T-cell (primary cell): ENCODE measurements at regions of chr12 and their contacts with region 1.

Region 1: DNA sequence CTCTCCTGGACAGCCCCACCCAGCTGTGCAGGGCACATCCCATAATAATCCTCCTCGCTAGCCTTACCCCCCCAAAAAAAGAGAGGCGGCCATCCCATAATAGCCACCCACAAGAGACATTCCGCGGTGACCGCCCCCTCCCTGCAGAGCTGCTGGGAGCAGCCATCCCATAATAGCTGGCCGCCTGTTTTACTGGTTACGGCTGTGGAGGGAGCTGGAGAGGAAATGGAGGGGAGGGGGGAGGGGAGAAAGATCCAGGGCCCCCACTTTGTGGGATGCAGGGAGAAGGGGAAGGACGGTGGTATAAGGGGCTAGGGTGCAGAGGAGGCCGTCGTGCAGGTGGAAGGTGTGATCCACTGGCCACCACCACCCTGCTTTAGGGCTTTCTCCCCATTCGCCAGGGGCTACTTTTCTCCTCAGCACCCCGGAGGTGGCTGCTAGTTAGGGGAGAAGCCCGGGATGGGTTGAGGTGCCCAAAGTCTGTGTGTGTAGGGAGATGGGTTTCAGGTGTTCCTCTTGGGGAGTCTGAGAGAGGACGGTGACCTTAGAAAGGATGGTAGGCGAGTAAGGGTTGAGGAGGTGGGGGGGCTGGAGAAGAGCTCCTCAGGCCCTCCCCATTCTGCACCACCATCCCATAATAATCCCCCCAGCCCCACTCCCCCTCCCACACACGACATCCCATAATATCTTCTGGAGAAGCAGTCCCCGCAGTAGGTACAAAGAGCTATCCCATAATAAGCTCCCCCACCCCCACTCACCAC is 6.0 kb upstream of the CHD4 start:
- DNase-seq: peak in 4 of 35 experiments; percentile 19 to 55 (median 48)
- ATAC-seq: peak; percentile 1 to 23 (median 7)
- H3K4me3 ChIP-seq: no peak overlapping the region
- H3K4me3 Mint-ChIP-seq: peak overlapping the region in 1 of 3 donors; percentile 72
- H3K27ac ChIP-seq: peak overlapping the region; percentile 65
- H3K27ac Mint-ChIP-seq: peak overlapping the region; percentile 94 to 96
- H3K4me1 ChIP-seq: peaks cover 20 to 44% of the 10 kb centered on the region in 2 experiments
- H3K4me1 Mint-ChIP-seq: peaks cover 38 to 57% (median 52%) of the 10 kb centered on the region in 3 donors
- H3K27me3 ChIP-seq: no peaks in the 10 kb centered on the region
- H3K27me3 Mint-ChIP-seq: no peaks in the 10 kb centered on the region

Region 2: GRCh38 chr12:6080154-6081045 is 532.8 kb before region 1 on chr12:
- CTCF ChIA-PET with region 1: no interaction called
- POLR2A ChIA-PET with region 1: interaction called in 1 of 2 experiments, 11 read pairs
- DNase-seq: no peak
- ATAC-seq: no peak
- H3K4me3 ChIP-seq: no peak overlapping the region
- H3K4me3 Mint-ChIP-seq: no peak overlapping the region
- H3K27ac ChIP-seq: no peak overlapping the region
- H3K27ac Mint-ChIP-seq: peak overlapping the region; percentile 17 to 28
- H3K4me1 ChIP-seq: peaks cover 5 to 7% of the 10 kb centered on the region in 2 experiments
- H3K4me1 Mint-ChIP-seq: peaks cover 6 to 12% (median 11%) of the 10 kb centered on the region in 3 donors
- H3K27me3 ChIP-seq: peaks cover 0 to 38% of the 10 kb centered on the region in 2 experiments
- H3K27me3 Mint-ChIP-seq: peaks cover 11 to 30% of the 10 kb centered on the region in 2 donors

Region 3: DNA sequence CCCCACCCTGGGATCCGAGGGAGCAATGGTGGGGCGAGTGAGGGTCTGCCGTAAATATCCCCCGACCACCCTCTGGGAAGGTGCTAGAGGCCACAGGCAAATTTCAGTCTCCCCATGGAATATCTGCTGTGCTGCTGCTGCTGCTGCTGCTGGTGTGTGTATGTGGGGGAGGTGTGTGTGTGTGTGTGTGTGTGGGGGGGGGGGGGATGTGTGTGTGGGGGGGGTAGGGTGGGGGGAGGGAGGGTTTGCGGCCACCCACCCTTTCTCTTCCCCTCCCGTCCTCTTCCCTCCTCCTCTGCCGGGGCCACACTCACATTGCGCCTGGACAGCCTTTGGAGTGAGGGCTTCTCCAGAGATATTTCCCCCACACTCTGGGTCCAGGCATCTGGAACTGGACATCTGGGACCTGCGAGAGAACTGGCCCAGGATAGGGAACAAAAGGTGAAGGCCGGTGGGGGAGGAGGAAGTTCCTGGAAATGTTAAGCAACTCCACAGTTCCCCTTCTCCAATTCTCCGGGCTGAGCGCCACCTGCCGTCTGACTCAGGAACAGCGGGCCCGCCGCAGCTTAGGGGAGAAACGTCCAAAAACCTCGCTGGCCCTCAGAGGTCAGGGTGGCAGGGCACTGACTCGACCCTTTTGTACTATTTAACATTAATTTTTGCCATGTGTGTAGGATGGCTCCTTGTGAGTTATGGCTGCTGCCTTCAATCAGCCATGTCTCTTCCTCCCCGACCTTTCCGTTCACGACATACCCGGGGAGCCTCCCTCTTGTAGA is 495.8 kb after region 1 on chr12 and contains the start of gene C1RL:
- CTCF ChIA-PET with region 1: no interaction called
- POLR2A ChIA-PET with region 1: interaction called in 1 of 2 experiments, 10 read pairs
- DNase-seq: peak in 34 of 35 experiments; percentile 24 to 82 (median 66)
- ATAC-seq: peak; percentile 24 to 53 (median 36)
- H3K4me3 ChIP-seq: peak within 1 kb of the TSS; percentile 77 to 88
- H3K4me3 Mint-ChIP-seq: peak within 1 kb of the TSS; percentile 89 to 93 (median 89)
- H3K27ac ChIP-seq: peak within 1 kb of the TSS; percentile 75
- H3K27ac Mint-ChIP-seq: peak within 1 kb of the TSS; percentile 96
- H3K4me1 ChIP-seq: peaks cover 8 to 33% of the 10 kb centered on the region in 2 experiments
- H3K4me1 Mint-ChIP-seq: peaks cover 43 to 49% (median 47%) of the 10 kb centered on the region in 3 donors
- H3K27me3 ChIP-seq: no peaks in the 10 kb centered on the region
- H3K27me3 Mint-ChIP-seq: no peaks in the 10 kb centered on the region
- total RNA-seq, gene C1RL: 18.1 to 36.6 (median 30.8) TPM